GM12878 (cell line): ENCODE measurements at regions of chr5 and their contacts with region 1.

Region 1: GRCh38 chr5:111158105-111158744 is 66.0 kb upstream of the CAMK4 start:
- DNase-seq: peak; percentile 64
- ATAC-seq: peak; percentile 93
- H3K4me3 ChIP-seq: no peak overlapping the region
- H3K27ac ChIP-seq: no peak overlapping the region
- H3K4me1 ChIP-seq: no peaks in the 10 kb centered on the region
- H3K27me3 ChIP-seq: no peaks in the 10 kb centered on the region
- CTCF ChIP-seq: peak; percentile 99 to 100 (median 100); a peak in 5 of 6 replicates
- EP300 ChIP-seq: no peak
- POLR2A ChIP-seq: no peak
- RAD21 ChIP-seq: peak; percentile 99

Region 2: DNA sequence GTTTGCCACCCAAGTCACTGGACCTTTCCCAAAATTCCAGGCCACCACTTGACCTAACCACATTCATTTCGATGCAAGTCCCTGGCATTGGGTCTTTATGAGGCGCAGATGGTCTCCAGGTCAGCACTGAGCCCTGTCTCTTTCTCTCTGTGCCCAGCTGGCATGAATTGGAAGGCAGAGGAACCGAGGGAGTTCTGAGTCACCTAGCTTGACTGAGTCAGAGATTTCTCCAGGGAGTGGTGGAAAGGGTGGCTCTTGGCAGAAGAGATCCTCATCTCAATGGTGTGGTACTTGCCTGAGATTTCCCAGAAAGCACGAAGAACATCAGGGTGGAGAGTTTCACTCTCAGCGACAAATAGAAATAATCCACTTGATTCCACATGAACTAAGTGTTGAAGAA is 22.3 kb before region 1 on chr5:
- CTCF ChIA-PET with region 1: no interaction called
- POLR2A ChIA-PET with region 1: no interaction called
- RAD21 ChIA-PET with region 1: no interaction called
- SMC1A ChIA-PET with region 1: no interaction called
- in situ Hi-C with region 1: no loop called
- intact Hi-C with region 1: no loop called
- DNase-seq: no peak
- ATAC-seq: no peak
- H3K4me3 ChIP-seq: no peak overlapping the region
- H3K27ac ChIP-seq: no peak overlapping the region
- H3K4me1 ChIP-seq: peaks cover 4% of the 10 kb centered on the region; the same call in 1 of the 2 replicates
- H3K27me3 ChIP-seq: no peaks in the 10 kb centered on the region
- CTCF ChIP-seq: no peak
- EP300 ChIP-seq: no peak
- POLR2A ChIP-seq: no peak
- RAD21 ChIP-seq: no peak

Region 3: GRCh38 chr5:111211341-111211740 is 53.1 kb after region 1 on chr5:
- CTCF ChIA-PET with region 1: interaction called, 10 read pairs
- POLR2A ChIA-PET with region 1: no interaction called
- RAD21 ChIA-PET with region 1: interaction called, 3 read pairs
- SMC1A ChIA-PET with region 1: interaction called, 3 read pairs
- in situ Hi-C with region 1: no loop called
- intact Hi-C with region 1: no loop called
- DNase-seq: no peak
- ATAC-seq: peak; percentile 95
- H3K4me3 ChIP-seq: no peak overlapping the region
- H3K27ac ChIP-seq: no peak overlapping the region
- H3K4me1 ChIP-seq: no peaks in the 10 kb centered on the region
- H3K27me3 ChIP-seq: no peaks in the 10 kb centered on the region
- CTCF ChIP-seq: no peak
- EP300 ChIP-seq: no peak
- POLR2A ChIP-seq: no peak
- RAD21 ChIP-seq: no peak

Region 4: DNA sequence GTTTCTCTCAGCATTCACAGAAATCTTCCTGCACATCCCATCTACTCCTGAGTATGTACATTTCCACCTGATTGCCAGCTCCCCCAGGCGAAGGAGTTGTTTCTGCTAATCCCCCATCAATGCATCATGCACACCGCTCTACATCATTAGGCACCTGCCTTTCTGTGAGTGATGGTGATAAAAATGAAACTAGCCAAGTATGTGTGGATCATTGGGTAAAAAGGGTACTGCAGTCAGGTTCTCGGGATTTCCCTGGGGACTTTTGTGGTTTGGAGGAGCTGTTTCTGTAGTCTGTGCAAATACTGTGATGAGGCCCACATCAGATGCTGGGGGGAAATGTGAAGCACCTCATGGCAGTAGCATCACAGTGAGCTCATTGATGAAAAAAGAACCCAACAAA is 96.4 kb after region 1 on chr5:
- CTCF ChIA-PET with region 1: interaction called, 5 read pairs
- POLR2A ChIA-PET with region 1: no interaction called
- RAD21 ChIA-PET with region 1: interaction called, 3 read pairs
- SMC1A ChIA-PET with region 1: interaction called, 13 read pairs
- in situ Hi-C with region 1: no loop called
- intact Hi-C with region 1: no loop called
- DNase-seq: peak; percentile 95
- ATAC-seq: peak; percentile 81
- H3K4me3 ChIP-seq: 0 out of 2 replicates have a peak overlapping the region, but pooled peaks have one; percentile 44
- H3K27ac ChIP-seq: peak overlapping the region; percentile 83
- H3K4me1 ChIP-seq: peaks cover 46% of the 10 kb centered on the region
- H3K27me3 ChIP-seq: no peaks in the 10 kb centered on the region
- CTCF ChIP-seq: no peak
- EP300 ChIP-seq: peak; percentile 94
- POLR2A ChIP-seq: peak; percentile 66
- RAD21 ChIP-seq: peak; percentile 30; the same call in 1 of the 2 replicates

Region 5: GRCh38 chr5:111461255-111461671 is 303.0 kb after region 1 on chr5:
- CTCF ChIA-PET with region 1: interaction called, 11 read pairs
- POLR2A ChIA-PET with region 1: interaction called, 3 read pairs
- RAD21 ChIA-PET with region 1: interaction called, 7 read pairs
- SMC1A ChIA-PET with region 1: interaction called, 17 read pairs
- in situ Hi-C with region 1: no loop called
- intact Hi-C with region 1: loop called (anchors 2 kb)
- DNase-seq: no peak
- ATAC-seq: peak; percentile 82
- H3K4me3 ChIP-seq: no peak overlapping the region
- H3K27ac ChIP-seq: no peak overlapping the region
- H3K4me1 ChIP-seq: peaks cover 3% of the 10 kb centered on the region; the same call in 1 of the 2 replicates
- H3K27me3 ChIP-seq: no peaks in the 10 kb centered on the region
- CTCF ChIP-seq: peak; percentile 26 to 52 (median 51); a peak in 4 of 6 replicates
- EP300 ChIP-seq: no peak
- POLR2A ChIP-seq: no peak
- RAD21 ChIP-seq: peak; percentile 30; the same call in 1 of the 2 replicates

Region 6: GRCh38 chr5:111486055-111486454 is 327.8 kb after region 1 on chr5:
- CTCF ChIA-PET with region 1: interaction called, 3 read pairs
- POLR2A ChIA-PET with region 1: no interaction called
- RAD21 ChIA-PET with region 1: interaction called, 3 read pairs
- SMC1A ChIA-PET with region 1: interaction called, 3 read pairs
- in situ Hi-C with region 1: no loop called
- intact Hi-C with region 1: loop called (anchors 5 kb)
- DNase-seq: no peak
- ATAC-seq: no peak
- H3K4me3 ChIP-seq: no peak overlapping the region
- H3K27ac ChIP-seq: no peak overlapping the region
- H3K4me1 ChIP-seq: no peaks in the 10 kb centered on the region
- H3K27me3 ChIP-seq: no peaks in the 10 kb centered on the region
- CTCF ChIP-seq: no peak
- EP300 ChIP-seq: no peak
- POLR2A ChIP-seq: no peak
- RAD21 ChIP-seq: no peak

Region 7: DNA sequence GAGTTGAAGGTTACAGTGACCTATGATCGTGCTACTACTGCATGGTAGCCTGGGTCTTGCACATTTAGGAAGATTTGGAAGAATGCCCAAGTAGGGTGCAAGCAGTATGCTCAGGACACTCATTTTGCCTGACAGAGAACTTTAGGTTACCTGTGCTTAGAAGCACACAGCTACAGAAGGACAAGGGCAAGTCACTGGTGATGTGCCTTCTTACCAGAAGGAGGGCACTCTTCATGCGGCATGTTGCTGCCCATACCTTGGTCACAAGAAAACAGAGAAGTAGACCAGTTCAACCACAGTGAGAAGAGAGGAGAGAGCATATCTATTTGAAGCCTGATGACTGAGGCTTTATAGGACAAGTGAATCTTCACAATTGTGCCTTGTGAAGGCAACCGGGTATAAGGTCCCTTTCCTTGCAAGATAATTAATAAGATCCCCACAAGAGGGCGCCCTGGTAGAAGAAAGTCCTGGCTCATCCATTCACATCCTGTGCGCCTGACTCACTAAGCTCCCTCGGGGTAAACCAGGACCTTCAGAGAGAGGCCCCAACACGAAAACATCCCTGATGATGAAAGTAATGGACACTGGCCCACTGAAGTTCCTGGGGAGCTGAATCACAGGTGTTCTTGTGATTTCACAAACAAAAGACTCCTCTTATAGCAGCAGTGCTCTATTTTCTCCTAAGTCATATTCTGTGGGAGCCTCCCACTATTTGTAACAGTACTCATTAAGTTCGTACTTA is 392.2 kb after region 1 on chr5:
- CTCF ChIA-PET with region 1: interaction called, 4 read pairs
- POLR2A ChIA-PET with region 1: no interaction called
- RAD21 ChIA-PET with region 1: interaction called, 8 read pairs
- SMC1A ChIA-PET with region 1: interaction called, 4 read pairs
- in situ Hi-C with region 1: no loop called
- intact Hi-C with region 1: loop called (anchors 5 kb)
- DNase-seq: peak; percentile 50
- ATAC-seq: peak; percentile 99
- H3K4me3 ChIP-seq: no peak overlapping the region
- H3K27ac ChIP-seq: no peak overlapping the region
- H3K4me1 ChIP-seq: no peaks in the 10 kb centered on the region
- H3K27me3 ChIP-seq: no peaks in the 10 kb centered on the region
- CTCF ChIP-seq: peak; percentile 50 to 76 (median 56)
- EP300 ChIP-seq: no peak
- POLR2A ChIP-seq: no peak
- RAD21 ChIP-seq: peak; percentile 91

Region 8: GRCh38 chr5:112024769-112025168 is 866.5 kb after region 1 on chr5:
- CTCF ChIA-PET with region 1: no interaction called
- POLR2A ChIA-PET with region 1: no interaction called
- RAD21 ChIA-PET with region 1: no interaction called
- SMC1A ChIA-PET with region 1: no interaction called
- in situ Hi-C with region 1: no loop called
- intact Hi-C with region 1: no loop called
- DNase-seq: no peak
- ATAC-seq: peak; percentile 36
- H3K4me3 ChIP-seq: no peak overlapping the region
- H3K27ac ChIP-seq: no peak overlapping the region
- H3K4me1 ChIP-seq: no peaks in the 10 kb centered on the region
- H3K27me3 ChIP-seq: no peaks in the 10 kb centered on the region
- CTCF ChIP-seq: no peak
- EP300 ChIP-seq: no peak
- POLR2A ChIP-seq: no peak
- RAD21 ChIP-seq: no peak